ENCODE measurements at regions of chr1 and their contacts with region 1.

Region 1: DNA sequence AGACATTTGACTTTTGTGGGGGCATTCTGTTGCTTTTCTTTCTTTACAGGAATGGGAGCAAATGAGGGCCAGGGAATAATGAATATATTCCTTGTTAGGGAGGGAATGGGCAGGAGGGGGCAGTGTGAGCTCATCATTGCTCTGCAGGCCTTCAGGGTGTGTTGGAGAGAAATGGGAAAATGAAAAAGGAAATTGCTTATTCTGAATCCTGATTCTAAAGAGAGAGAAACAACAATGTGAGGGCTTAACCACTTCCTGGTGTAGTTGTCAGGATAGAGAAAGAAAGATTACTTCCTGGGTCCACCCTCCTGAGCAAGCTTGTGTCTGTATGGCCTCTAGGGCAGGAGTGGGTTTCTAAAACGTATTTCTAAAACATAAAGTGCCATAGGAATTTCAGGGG is 28.3 kb downstream of the VANGL2 start:
- DNase-seq: peak; percentile 49 to 79
- ATAC-seq: peak; percentile 89

Region 2: DNA sequence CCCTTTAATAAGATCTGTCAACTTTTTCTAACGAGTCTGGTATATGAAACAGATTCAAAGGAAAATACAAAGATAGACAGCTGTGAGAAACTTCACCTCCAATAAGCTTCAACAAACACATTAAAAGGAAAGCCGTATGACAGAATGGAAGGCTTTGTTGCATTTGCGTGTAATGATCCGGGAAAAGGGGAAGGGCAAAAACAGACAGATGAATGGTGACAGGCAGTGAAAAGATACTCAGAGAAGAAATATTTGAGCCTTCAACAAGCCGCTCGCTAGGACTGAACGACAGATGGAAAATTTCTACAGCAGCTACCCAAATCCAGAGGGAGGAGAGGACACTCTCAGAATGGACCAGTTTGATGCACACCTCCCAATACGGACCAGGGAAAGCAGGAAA is 100.5 kb before region 1 on chr1:
- intact Hi-C with region 1: no loop called
- DNase-seq: no peak
- ATAC-seq: no peak

Region 3: GRCh38 chr1:160607011-160607671 is 178.5 kb after region 1 on chr1:
- intact Hi-C with region 1: loop called (anchors 5 kb)
- DNase-seq: peak; percentile 22 to 36
- ATAC-seq: peak; percentile 99

Measured in left colon (tissue), 2 donors.